ENCODE measurements at regions of chr9 and their contacts with region 1.

Region 1: DNA sequence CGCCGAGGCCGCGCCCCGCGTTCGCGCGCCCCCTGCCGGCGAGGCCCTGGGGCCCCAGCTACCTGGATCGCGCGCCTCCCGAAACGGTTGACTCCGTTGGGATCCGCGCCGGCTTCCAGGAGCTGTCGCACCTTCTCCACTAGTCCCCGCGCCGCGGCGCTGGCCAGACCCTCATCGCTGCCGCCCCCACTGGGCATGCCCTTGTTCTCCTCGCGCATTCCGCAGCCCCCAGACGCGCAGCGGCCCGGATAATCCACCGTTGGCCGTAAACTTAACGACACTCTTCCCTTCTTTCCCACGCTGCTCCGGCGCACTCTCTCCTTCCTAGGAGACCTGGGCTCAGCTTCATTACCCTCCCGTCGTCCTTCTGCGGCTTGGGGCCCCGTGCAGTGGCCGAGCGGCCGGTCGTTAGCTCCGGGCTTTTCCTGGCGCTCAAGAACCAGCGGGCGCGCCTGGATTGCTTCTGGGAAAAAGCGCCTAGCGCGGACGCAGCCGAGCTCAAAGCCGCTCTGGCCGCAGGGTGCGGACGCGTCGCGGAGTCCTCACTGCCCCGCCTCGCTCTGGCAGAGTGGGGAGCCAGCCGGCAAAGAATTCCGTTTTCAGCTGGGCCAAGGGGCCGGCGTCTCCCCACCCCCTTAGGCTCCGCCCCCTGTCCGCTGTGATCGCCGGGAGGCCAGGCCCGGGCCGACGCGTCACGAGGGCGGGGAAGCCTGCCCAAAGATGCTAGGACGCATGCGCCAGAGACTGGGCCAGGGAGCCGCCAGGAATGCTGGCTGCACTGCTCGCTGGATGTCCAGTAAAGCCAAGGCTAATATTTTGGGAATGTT is at the start of gene CDKN2B:
- DNase-seq: peak; percentile 84
- ATAC-seq: peak; percentile 86
- H3K4me3 Mint-ChIP-seq: peak within 1 kb of the TSS; percentile 81
- H3K27ac Mint-ChIP-seq: no peak within 1 kb of the TSS
- H3K4me1 Mint-ChIP-seq: peaks cover 30% of the 10 kb centered on the region
- H3K27me3 Mint-ChIP-seq: peaks cover 55% of the 10 kb centered on the region
- total RNA-seq, gene CDKN2B: 0.93 to 5.9 TPM

Region 2: DNA sequence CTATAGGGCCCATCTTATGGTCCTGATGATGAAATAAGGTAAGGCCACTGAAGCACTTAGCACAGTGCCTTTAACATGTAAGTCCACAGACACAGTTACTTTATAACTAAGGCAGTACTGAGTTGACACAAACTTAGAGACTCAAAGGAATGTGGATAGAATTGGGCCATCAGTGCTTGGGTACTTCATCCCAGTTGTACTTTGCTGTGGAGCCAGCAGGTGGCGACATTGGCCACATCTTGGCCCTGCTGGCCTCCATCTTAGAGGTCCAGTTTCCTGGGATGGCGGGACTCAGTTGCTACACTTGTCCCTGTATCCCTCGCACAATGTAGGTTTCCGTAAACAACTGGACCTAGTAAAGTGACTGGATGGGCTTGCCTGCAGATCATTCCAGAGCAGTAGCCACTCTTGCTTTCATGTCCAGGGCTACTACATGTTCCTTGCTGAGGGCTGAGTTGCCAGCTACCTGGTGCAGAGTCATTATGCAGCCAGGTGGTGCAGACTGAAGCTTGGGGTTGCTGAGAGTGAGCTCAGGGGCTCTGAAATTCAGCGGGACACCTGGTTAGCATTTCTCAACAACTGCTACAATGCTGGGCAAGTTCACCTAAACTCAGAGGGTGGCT is 195.9 kb before region 1 on chr9:
- CTCF ChIA-PET with region 1: interaction called, 72 read pairs
- DNase-seq: peak; percentile 75
- ATAC-seq: peak; percentile 65
- H3K4me3 Mint-ChIP-seq: no peak overlapping the region
- H3K27ac Mint-ChIP-seq: peak overlapping the region; percentile 16
- H3K4me1 Mint-ChIP-seq: peaks cover 32% of the 10 kb centered on the region
- H3K27me3 Mint-ChIP-seq: no peaks in the 10 kb centered on the region

Region 3: GRCh38 chr9:21974548-21975409 is 34.2 kb before region 1 on chr9:
- CTCF ChIA-PET with region 1: interaction called, 37 read pairs
- DNase-seq: no peak
- ATAC-seq: peak; percentile 78
- H3K4me3 Mint-ChIP-seq: peak overlapping the region; percentile 73
- H3K27ac Mint-ChIP-seq: no peak overlapping the region
- H3K4me1 Mint-ChIP-seq: peaks cover 25% of the 10 kb centered on the region
- H3K27me3 Mint-ChIP-seq: peaks cover 95% of the 10 kb centered on the region

Region 4: DNA sequence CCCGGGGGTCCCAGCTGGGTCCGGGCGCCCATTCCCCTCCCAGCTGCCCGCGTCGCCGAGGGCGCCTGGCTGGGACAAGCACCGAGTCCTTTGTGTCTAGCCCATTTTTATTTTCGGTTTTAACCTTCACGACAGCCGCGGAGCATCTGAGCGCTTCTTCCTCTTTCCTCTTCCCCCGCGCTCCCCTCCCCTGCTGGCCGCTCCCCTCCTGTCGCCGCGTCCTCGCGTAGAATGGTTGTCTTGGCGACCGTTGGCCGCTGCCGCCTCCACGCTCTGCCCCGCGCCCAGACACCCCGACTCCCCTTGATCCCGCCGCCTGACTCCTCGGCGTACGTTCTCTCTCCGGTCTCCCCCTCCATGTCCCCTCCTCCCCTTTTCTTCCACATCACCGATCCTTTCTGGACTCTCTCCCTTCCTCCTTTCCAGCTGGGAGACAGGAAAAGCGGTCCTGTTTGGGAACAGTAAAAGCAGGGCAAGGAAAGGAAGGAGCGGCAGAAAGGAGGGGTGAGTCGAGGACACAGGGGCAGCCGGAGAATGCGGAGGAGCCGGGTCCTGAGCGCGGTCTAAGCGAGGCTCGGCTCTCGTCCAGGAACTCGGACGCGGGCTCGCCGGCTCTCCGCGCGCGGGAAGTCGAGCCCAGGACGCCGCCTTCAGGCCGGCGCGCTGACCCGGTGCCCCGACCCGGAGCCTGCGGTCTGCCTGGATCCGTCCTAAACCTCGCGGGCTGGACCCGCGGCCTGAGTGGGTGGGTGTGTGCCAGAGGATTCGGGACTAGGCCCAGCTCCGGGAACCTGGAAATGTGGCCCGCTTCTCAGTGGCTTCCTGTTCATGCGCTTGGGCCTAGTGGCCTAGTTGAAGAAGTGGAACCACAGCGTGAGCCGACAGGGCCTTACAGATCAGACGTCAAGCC is 13.5 kb before region 1 on chr9:
- CTCF ChIA-PET with region 1: interaction called, 62 read pairs
- DNase-seq: peak; percentile 92
- ATAC-seq: peak; percentile 83
- H3K4me3 Mint-ChIP-seq: peak overlapping the region; percentile 95
- H3K27ac Mint-ChIP-seq: peak overlapping the region; percentile 98
- H3K4me1 Mint-ChIP-seq: peaks cover 23% of the 10 kb centered on the region
- H3K27me3 Mint-ChIP-seq: peaks cover 26% of the 10 kb centered on the region

Region 5: DNA sequence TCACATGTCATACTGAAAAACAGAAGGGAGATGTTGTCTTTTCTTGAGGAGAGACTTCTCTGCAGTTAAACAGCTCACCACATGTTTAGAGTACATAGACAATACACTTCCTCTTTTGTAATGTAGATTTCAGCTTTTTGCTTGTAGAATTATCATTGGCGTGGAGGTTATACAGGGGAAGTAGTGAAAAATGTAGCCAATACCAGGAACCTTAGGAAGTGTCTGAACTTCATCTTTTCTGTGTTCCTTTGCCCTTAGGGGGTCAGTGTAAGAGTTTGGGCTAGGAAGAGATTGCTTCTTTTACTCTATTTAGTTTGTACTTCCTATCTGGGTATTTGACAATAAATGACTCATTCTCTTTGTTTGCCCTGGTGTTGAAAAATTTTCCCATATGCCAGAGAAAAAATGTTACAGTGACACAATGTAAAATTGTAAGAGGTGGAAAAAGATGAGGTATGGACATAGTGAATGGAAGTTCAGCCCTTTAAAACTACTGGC is 21.2 kb after region 1 on chr9:
- CTCF ChIA-PET with region 1: interaction called, 71 read pairs
- DNase-seq: no peak
- ATAC-seq: peak; percentile 33
- H3K4me3 Mint-ChIP-seq: no peak overlapping the region
- H3K27ac Mint-ChIP-seq: no peak overlapping the region
- H3K4me1 Mint-ChIP-seq: peaks cover 9% of the 10 kb centered on the region
- H3K27me3 Mint-ChIP-seq: peaks cover 14% of the 10 kb centered on the region

Region 6: GRCh38 chr9:22052376-22052945 is 43.5 kb after region 1 on chr9:
- CTCF ChIA-PET with region 1: interaction called, 27 read pairs
- DNase-seq: peak; percentile 63
- ATAC-seq: peak; percentile 77
- H3K4me3 Mint-ChIP-seq: peak overlapping the region; percentile 11
- H3K27ac Mint-ChIP-seq: peak overlapping the region; percentile 76
- H3K4me1 Mint-ChIP-seq: peaks cover 47% of the 10 kb centered on the region
- H3K27me3 Mint-ChIP-seq: peaks cover 7% of the 10 kb centered on the region

Region 7: GRCh38 chr9:22244141-22245011 is 235.4 kb after region 1 on chr9:
- CTCF ChIA-PET with region 1: interaction called, 11 read pairs
- DNase-seq: peak; percentile 55
- ATAC-seq: peak; percentile 59
- H3K4me3 Mint-ChIP-seq: no peak overlapping the region
- H3K27ac Mint-ChIP-seq: no peak overlapping the region
- H3K4me1 Mint-ChIP-seq: peaks cover 25% of the 10 kb centered on the region
- H3K27me3 Mint-ChIP-seq: peaks cover 55% of the 10 kb centered on the region